ENCODE measurements at regions of chr14 and their contacts with region 1.

Region 1: GRCh38 chr14:101215927-101216326 is 312.4 kb upstream of the RTL1 start:
- DNase-seq: no peak
- ATAC-seq: no peak
- H3K4me3 ChIP-seq: no peak overlapping the region
- H3K27ac ChIP-seq: no peak overlapping the region
- H3K4me1 ChIP-seq: no peaks in the 10 kb centered on the region
- H3K27me3 ChIP-seq: no peaks in the 10 kb centered on the region
- CTCF ChIP-seq: no peak

Region 2: GRCh38 chr14:101183376-101184103 is 32.4 kb before region 1 on chr14:
- CTCF ChIA-PET with region 1: interaction called, 10 read pairs
- POLR2A ChIA-PET with region 1: no interaction called
- intact Hi-C with region 1: no loop called
- DNase-seq: no peak
- ATAC-seq: peak; percentile 54
- H3K4me3 ChIP-seq: no peak overlapping the region
- H3K27ac ChIP-seq: no peak overlapping the region
- H3K4me1 ChIP-seq: no peaks in the 10 kb centered on the region
- H3K27me3 ChIP-seq: no peaks in the 10 kb centered on the region
- CTCF ChIP-seq: peak; percentile 57

Region 3: GRCh38 chr14:101250336-101250947 is 34.5 kb after region 1 on chr14:
- CTCF ChIA-PET with region 1: no interaction called
- POLR2A ChIA-PET with region 1: no interaction called
- intact Hi-C with region 1: no loop called
- DNase-seq: no peak
- ATAC-seq: peak; percentile 40
- H3K4me3 ChIP-seq: no peak overlapping the region
- H3K27ac ChIP-seq: no peak overlapping the region
- H3K4me1 ChIP-seq: no peaks in the 10 kb centered on the region
- H3K27me3 ChIP-seq: no peaks in the 10 kb centered on the region
- CTCF ChIP-seq: no peak